ENCODE measurements at regions of chr21 and their contacts with region 1.

Region 1: DNA sequence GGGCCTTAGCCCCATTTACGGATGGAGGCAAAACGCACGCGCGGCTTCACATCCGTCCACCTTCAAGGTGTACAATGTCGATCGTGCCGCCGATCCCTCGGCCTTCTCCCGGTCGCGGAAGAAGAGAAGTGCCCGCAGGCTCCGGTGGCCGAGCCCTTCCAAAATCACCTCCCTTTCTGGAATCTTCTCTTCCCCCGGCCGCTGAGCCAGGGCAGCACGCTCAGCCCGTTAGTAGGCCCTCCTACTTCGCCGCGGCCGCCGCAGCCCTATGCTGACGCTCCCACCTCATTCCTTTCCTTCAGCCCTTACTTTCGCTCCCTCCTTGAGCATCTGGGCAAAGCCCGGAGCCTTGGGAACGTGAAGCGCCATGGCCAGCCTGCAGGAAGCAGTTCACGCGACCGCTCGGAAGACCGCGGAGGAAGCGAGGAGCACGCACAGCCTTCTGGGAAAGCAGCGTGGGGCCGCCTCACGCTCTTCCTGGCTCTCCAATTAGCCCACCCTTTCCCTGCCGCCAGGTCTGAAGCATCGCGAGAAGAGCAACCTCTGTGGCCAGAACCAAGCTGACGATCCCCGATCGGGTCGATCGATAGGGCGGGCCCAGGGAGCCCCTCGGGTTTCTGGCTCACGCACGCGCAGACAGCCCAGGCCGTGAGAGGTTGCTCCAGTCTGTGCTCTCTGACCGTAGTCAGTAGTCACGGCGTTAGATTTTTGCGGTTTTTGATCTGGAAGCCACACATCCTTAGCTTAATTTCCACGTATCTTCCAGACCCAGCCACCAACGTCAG is at the start of gene CCT8:
- DNase-seq: peak; percentile 99 to 100 (median 99)
- ATAC-seq: peak; percentile 97
- H3K4me3 ChIP-seq: peak within 1 kb of the TSS; percentile 83
- H3K27ac ChIP-seq: peak within 1 kb of the TSS; percentile 92
- H3K4me1 ChIP-seq: peaks cover 8 to 9% of the 10 kb centered on the region in 2 experiments
- H3K27me3 ChIP-seq: no peaks in the 10 kb centered on the region
- CTCF ChIP-seq: peak in 1 of 3 experiments; percentile 30; a peak in 2 of 6 replicates
- EP300 ChIP-seq: no peak
- POLR2A ChIP-seq: peak; percentile 99
- RAD21 ChIP-seq: no peak
- polyA plus RNA-seq, gene CCT8: 705 to 1,153 TPM

Region 2: DNA sequence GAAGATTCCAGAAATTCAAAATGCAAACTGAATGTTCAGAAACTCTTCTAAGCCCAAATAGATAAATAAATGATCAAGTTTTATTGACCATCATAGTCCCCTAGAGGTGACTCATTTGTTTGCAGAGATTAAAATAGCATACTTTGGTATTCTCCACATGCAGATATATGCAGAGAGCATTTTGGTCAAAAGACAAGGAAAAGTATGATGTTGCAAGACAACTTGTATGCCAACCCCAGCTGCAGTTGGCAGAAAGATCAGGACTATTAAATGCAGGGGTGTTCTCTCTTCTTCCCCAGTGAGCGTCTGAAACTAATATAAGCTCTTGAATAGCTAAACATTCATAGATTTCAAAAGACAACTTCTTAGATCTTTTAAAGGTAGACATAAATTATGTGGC is 485.7 kb before region 1 on chr21:
- CTCF ChIA-PET with region 1: no interaction called
- POLR2A ChIA-PET with region 1: no interaction called
- in situ Hi-C with region 1: no loop called
- intact Hi-C with region 1: no loop called
- DNase-seq: no peak
- ATAC-seq: no peak
- H3K4me3 ChIP-seq: no peak overlapping the region
- H3K27ac ChIP-seq: no peak overlapping the region
- H3K4me1 ChIP-seq: no peaks in the 10 kb centered on the region
- H3K27me3 ChIP-seq: no peaks in the 10 kb centered on the region
- CTCF ChIP-seq: no peak
- EP300 ChIP-seq: no peak
- POLR2A ChIP-seq: no peak
- RAD21 ChIP-seq: no peak

Region 3: DNA sequence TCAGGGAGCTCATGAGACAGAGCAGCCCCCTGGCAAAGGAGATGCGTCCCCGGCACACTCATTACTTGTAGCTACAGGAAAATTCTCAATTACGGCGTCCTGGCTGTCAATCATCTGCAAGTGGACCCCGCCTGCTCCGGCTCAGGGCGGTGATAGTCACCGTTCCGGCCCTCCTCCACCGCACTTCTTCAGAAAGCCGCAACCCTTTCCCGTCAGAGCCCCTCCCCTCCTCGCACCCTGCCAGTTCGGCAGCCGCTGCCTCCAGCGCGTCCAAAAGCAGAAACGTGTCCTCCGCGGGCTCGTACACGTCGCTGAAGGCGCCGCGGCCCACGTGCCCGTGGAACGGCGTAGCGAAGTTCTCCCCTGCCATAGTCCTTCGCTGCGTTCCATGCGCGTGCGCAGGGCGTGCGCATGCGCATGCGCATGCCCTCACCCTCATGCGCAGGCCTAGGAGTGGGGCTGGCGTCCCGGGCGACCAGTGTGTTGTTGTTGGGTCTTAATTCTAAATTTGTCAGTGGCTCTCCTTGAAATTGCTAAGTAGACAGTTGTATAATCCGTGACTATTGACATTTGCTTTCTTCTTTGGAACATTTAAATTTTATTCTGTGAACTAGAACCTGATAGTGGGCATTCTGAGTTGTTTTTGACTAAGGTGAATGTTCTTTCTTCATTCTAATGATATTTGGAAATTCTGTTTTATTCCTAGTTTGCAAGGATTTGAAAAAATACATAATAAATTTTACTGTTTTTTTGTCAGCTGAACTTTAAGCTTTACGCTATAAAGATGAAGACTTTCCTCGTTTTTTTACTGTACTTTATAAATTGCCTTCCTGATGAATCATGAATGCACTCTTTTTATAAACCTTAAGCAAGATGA is 188.2 kb before region 1 on chr21:
- CTCF ChIA-PET with region 1: no interaction called
- POLR2A ChIA-PET with region 1: interaction called, 3 read pairs
- in situ Hi-C with region 1: no loop called
- intact Hi-C with region 1: loop called (anchors 1 kb)
- DNase-seq: peak; percentile 96 to 99 (median 98)
- ATAC-seq: peak; percentile 96
- H3K4me3 ChIP-seq: peak overlapping the region; percentile 48
- H3K27ac ChIP-seq: peak overlapping the region; percentile 95
- H3K4me1 ChIP-seq: peaks cover 5 to 7% of the 10 kb centered on the region in 2 experiments; a peak in 3 of 5 replicates
- H3K27me3 ChIP-seq: peaks cover 0 to 4% of the 10 kb centered on the region in 2 experiments; a peak in 2 of 5 replicates
- CTCF ChIP-seq: no peak
- EP300 ChIP-seq: no peak
- POLR2A ChIP-seq: peak; percentile 98
- RAD21 ChIP-seq: no peak; a peak in 1 of 4 replicates

Region 4: DNA sequence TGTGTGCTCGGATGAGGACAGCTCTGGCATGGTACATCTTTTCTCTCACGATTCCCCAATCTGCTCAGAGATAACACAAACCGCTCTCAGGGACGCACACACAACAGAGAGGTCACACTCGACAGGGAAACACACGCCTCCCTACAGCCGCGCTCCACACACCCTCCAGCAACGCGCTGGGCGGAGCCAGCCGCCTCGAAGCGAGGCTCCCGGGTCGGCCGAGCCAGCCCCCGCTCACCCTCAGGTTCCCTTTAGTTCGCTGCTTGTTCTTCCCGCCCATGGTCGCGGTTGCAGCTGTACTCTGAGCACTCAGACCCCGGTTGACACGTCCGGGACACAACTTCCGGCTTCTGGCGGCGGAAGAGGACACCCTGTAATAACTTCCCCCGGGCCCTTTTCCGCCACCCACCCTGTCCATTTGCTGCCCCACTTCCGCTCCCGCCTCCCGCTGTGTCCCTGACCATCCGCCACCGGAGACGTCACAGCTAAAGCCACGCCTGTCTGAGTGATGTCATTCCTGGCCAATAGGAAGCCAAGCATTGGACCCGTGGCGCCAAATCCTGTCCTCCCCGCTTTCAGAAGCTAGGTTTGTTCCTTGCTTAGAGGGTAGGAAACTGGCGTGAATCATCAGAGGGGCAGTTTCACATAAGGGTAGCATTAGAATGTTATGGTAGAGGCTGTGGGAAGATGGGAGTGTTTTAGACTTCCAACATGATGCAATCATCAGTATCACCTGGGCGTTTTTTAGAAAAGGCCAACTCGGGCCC is 80.7 kb before region 1 on chr21 and contains the start of gene LTN1:
- CTCF ChIA-PET with region 1: no interaction called
- POLR2A ChIA-PET with region 1: interaction called, 4 read pairs
- in situ Hi-C with region 1: no loop called
- intact Hi-C with region 1: loop called (anchors 2 kb)
- DNase-seq: peak; percentile 98 to 100 (median 98)
- ATAC-seq: peak; percentile 93
- H3K4me3 ChIP-seq: peak within 1 kb of the TSS; percentile 91
- H3K27ac ChIP-seq: peak within 1 kb of the TSS; percentile 93
- H3K4me1 ChIP-seq: peaks cover 4 to 8% of the 10 kb centered on the region in 2 experiments; a peak in 4 of 5 replicates
- H3K27me3 ChIP-seq: no peaks in the 10 kb centered on the region; a peak in 1 of 5 replicates
- CTCF ChIP-seq: no peak
- EP300 ChIP-seq: peak; percentile 47; the same call in 1 of the 2 replicates
- POLR2A ChIP-seq: peak; percentile 96
- RAD21 ChIP-seq: no peak; a peak in 1 of 4 replicates
- polyA plus RNA-seq, gene LTN1: 16.6 to 21.8 TPM

Region 5: GRCh38 chr21:29024474-29025327 is 48.7 kb before region 1 on chr21 and contains the start of gene USP16:
- CTCF ChIA-PET with region 1: no interaction called
- POLR2A ChIA-PET with region 1: interaction called, 22 read pairs
- in situ Hi-C with region 1: no loop called
- intact Hi-C with region 1: loop called (anchors 5 kb)
- DNase-seq: peak; percentile 100
- ATAC-seq: peak; percentile 97
- H3K4me3 ChIP-seq: peak within 1 kb of the TSS; percentile 65
- H3K27ac ChIP-seq: peak within 1 kb of the TSS; percentile 97
- H3K4me1 ChIP-seq: peaks cover 3 to 13% of the 10 kb centered on the region in 2 experiments; a peak in 1 of 5 replicates
- H3K27me3 ChIP-seq: no peaks in the 10 kb centered on the region
- CTCF ChIP-seq: peak in 2 of 3 experiments; percentile 26 to 29; a peak in 2 of 6 replicates
- EP300 ChIP-seq: no peak; the same call in 1 of the 2 replicates
- POLR2A ChIP-seq: peak; percentile 95
- RAD21 ChIP-seq: 0 out of 4 replicates have a peak, but pooled peaks of 1 of the 2 experiments have one; percentile 5
- polyA plus RNA-seq, gene USP16: 62.8 to 67.4 TPM

Region 6: DNA sequence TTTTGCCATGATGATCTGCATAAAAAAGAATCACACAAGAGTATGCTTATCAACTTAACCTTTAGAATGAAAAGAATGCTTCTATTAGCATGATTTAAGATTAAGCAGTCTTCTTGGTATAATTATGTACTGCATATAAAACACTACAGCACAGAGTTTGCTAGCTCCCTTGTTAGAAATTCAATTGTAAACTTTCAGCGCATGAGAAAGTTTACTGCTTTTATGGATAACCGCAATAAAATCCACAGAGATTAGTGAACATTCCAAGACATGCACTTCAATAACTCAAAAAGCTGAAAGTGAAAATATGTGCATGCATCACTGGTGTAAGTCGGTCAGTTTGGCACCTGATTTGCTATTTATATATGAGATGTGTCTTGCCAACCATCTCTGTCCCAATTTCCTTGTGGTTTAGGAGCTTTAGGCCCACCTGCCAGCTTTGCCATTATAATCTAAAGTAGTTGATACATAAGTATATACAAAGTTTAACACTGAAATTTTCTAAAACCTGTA is 16.8 kb before region 1 on chr21:
- CTCF ChIA-PET with region 1: no interaction called
- POLR2A ChIA-PET with region 1: interaction called, 31 read pairs
- in situ Hi-C with region 1: no loop called
- intact Hi-C with region 1: no loop called
- DNase-seq: no peak
- ATAC-seq: no peak
- H3K4me3 ChIP-seq: no peak overlapping the region
- H3K27ac ChIP-seq: no peak overlapping the region
- H3K4me1 ChIP-seq: no peaks in the 10 kb centered on the region
- H3K27me3 ChIP-seq: no peaks in the 10 kb centered on the region
- CTCF ChIP-seq: no peak
- EP300 ChIP-seq: no peak
- POLR2A ChIP-seq: no peak
- RAD21 ChIP-seq: no peak

Region 7: GRCh38 chr21:29181799-29182470 is 108.5 kb after region 1 on chr21:
- CTCF ChIA-PET with region 1: no interaction called
- POLR2A ChIA-PET with region 1: no interaction called
- in situ Hi-C with region 1: no loop called
- intact Hi-C with region 1: no loop called
- DNase-seq: peak in 1 of 4 experiments; percentile 41
- ATAC-seq: peak; percentile 85
- H3K4me3 ChIP-seq: no peak overlapping the region
- H3K27ac ChIP-seq: no peak overlapping the region
- H3K4me1 ChIP-seq: peaks cover 0 to 5% of the 10 kb centered on the region in 2 experiments; a peak in 1 of 5 replicates
- H3K27me3 ChIP-seq: peaks cover 9 to 20% of the 10 kb centered on the region in 2 experiments; a peak in 4 of 5 replicates
- CTCF ChIP-seq: no peak
- EP300 ChIP-seq: no peak
- POLR2A ChIP-seq: no peak
- RAD21 ChIP-seq: no peak

Region 8: DNA sequence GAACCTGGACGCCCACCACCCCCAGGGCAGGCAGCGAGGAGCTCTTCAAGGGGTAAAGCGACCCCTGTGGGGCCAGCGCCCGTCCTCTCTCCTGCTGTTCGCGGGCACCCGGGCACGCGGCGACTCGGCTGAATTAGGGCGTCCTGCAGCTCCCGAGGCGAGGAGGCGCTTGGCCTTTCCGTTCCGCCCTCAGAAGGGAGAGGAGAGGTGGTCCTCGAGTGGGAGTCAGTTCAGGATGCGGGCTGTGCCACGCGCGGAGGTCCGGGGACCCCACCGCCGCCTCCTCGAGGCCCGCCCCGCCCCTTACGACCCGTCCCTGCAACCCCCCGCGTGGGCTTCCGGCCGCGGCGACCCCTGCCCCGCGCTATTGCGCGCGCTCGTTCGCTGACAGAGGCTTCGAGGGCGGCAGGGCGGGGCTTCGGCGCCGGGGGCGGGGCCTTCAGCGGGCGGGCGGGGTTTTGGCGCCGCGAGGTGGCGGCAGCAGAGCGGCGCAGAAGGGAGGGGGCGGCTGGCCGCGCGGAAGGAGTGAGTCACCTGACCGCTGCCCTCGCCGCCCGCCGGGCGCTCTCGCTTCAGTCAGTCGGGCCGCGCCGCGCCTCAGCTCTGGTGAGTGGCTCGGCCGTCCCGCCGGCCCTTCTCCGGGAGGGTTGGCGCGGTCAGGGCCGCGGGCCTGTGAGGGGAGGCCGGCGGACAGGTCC is 225.1 kb after region 1 on chr21 and contains the start of gene BACH1:
- CTCF ChIA-PET with region 1: no interaction called
- POLR2A ChIA-PET with region 1: interaction called, 8 read pairs
- in situ Hi-C with region 1: no loop called
- intact Hi-C with region 1: loop called (anchors 5 kb)
- DNase-seq: peak; percentile 95 to 97 (median 96)
- ATAC-seq: peak; percentile 86
- H3K4me3 ChIP-seq: peak within 1 kb of the TSS; percentile 74
- H3K27ac ChIP-seq: peak within 1 kb of the TSS; percentile 98
- H3K4me1 ChIP-seq: peaks cover 10 to 29% of the 10 kb centered on the region in 2 experiments
- H3K27me3 ChIP-seq: no peaks in the 10 kb centered on the region
- CTCF ChIP-seq: peak in 2 of 3 experiments; percentile 55 to 77; a peak in 4 of 6 replicates
- EP300 ChIP-seq: no peak
- POLR2A ChIP-seq: peak; percentile 80
- RAD21 ChIP-seq: peak; percentile 48 to 77
- polyA plus RNA-seq, gene BACH1: 10.6 to 12.6 TPM

Region 9: GRCh38 chr21:29403922-29404538 is 330.6 kb after region 1 on chr21:
- CTCF ChIA-PET with region 1: no interaction called
- POLR2A ChIA-PET with region 1: no interaction called
- in situ Hi-C with region 1: no loop called
- intact Hi-C with region 1: no loop called
- DNase-seq: peak in 1 of 4 experiments; percentile 28
- ATAC-seq: peak; percentile 93
- H3K4me3 ChIP-seq: no peak overlapping the region
- H3K27ac ChIP-seq: no peak overlapping the region
- H3K4me1 ChIP-seq: peaks cover 3 to 5% of the 10 kb centered on the region in 2 experiments; a peak in 4 of 5 replicates
- H3K27me3 ChIP-seq: no peaks in the 10 kb centered on the region
- CTCF ChIP-seq: no peak
- EP300 ChIP-seq: no peak; the same call in 1 of the 2 replicates
- POLR2A ChIP-seq: no peak
- RAD21 ChIP-seq: no peak

Region 10: DNA sequence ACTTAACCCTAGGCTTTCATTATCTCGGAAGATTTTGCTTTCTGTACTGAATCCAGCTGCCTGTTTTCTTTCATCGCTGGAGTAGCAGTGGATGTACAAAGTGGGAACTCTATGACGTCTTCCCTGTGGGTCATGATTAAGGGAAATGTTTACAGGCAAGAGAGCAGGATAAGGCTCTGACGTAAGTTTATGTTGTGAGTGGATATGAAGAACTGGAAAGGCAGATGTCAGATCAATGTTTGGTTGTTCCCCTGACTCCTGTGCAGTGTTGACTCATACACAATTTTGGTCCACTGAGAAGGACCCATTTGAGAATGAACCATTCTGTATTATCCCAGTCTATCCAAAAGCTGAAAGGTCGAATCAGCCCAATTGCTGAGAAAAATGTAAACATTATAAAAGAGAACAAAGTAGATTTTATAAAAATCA is 574.0 kb after region 1 on chr21:
- CTCF ChIA-PET with region 1: no interaction called
- POLR2A ChIA-PET with region 1: no interaction called
- in situ Hi-C with region 1: no loop called
- intact Hi-C with region 1: loop called (anchors 5 kb)
- DNase-seq: peak; percentile 58 to 97 (median 74)
- ATAC-seq: peak; percentile 73
- H3K4me3 ChIP-seq: no peak overlapping the region
- H3K27ac ChIP-seq: peak overlapping the region; percentile 95
- H3K4me1 ChIP-seq: peaks cover 21 to 97% of the 10 kb centered on the region in 2 experiments
- H3K27me3 ChIP-seq: no peaks in the 10 kb centered on the region
- CTCF ChIP-seq: no peak
- EP300 ChIP-seq: peak; percentile 96
- POLR2A ChIP-seq: peak; percentile 69
- RAD21 ChIP-seq: peak in 1 of 2 experiments; percentile 27; a peak in 1 of 4 replicates